Gastrocnemius medialis (tissue), 4 donors: ENCODE measurements at regions of chr6 and their contacts with region 1.

Region 1: DNA sequence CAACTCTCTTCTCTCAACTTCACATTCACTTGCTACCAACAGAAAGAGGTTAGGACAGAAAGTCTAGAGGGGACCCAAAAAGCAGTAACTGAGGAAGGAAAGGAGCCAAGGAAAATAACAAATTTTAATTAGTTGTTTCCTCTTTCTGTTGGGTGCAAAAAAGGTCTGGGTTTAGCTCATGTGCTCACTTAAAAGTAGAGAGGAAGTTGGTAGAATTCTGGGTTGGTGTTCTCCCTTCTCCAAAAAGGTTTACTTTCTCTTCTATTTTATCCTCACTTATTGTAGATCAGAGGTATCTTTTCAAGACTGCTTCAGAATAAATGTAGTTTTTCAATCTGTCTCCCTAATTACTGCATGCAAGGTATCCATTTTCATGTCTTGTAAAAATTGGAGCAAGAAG is 42.8 kb downstream of the MAP3K7 start:
- DNase-seq: no peak
- ATAC-seq: no peak
- H3K4me3 ChIP-seq: no peak overlapping the region
- H3K27ac ChIP-seq: no peak overlapping the region
- H3K4me1 ChIP-seq: no peaks in the 10 kb centered on the region
- H3K27me3 ChIP-seq: no peaks in the 10 kb centered on the region
- CTCF ChIP-seq: no peak
- POLR2A ChIP-seq: no peak

Region 2: GRCh38 chr6:89729818-89730217 is 814.3 kb before region 1 on chr6:
- in situ Hi-C with region 1: no loop called
- intact Hi-C with region 1: loop called (anchors 5 kb)
- DNase-seq: no peak
- ATAC-seq: no peak
- H3K4me3 ChIP-seq: no peak overlapping the region
- H3K27ac ChIP-seq: no peak overlapping the region
- H3K4me1 ChIP-seq: no peaks in the 10 kb centered on the region
- H3K27me3 ChIP-seq: no peaks in the 10 kb centered on the region
- CTCF ChIP-seq: no peak
- POLR2A ChIP-seq: no peak